ENCODE measurements at regions of chr1 and their contacts with region 1.

Region 1: DNA sequence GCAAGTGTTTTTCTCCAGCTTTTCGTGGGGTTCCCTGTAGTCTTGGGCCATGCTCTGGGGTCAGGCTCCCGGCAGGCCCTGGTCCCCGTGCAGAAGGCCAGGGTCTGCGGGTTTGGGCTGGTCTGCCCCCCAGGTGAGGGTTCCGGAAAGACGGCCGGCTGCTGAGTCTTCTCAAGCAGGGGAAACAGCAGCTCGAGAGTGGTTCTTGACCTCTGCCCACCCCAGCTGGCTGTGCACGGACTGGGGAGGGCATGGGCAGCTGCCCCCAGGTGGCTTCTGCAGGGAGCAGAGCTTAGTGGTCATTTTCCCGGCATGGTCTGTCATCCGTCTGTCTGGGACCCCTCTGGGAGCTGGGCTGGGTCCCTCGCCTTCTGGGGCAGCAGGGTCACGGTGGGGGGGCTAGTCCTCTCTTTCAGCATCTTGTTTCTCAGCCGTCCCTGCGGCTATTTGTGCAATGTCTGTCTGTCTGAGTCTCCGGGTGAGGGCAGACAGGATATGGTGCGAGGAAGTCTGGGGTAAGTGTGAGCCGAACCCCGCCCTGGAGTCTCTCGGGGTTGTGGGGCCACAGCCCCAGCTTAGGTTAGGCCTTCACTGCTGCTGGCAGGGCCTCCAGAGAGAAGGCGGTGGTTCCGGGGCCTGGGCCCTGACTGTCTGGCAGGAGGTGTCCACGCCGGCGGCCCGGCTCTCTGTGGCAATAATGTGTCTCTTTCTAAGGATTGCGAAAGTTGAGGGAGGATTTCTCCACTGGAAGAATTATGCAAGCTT is 6.1 kb downstream of the SKI start:
- DNase-seq: peak; percentile 95
- ATAC-seq: peak; percentile 57 to 80

Region 2: DNA sequence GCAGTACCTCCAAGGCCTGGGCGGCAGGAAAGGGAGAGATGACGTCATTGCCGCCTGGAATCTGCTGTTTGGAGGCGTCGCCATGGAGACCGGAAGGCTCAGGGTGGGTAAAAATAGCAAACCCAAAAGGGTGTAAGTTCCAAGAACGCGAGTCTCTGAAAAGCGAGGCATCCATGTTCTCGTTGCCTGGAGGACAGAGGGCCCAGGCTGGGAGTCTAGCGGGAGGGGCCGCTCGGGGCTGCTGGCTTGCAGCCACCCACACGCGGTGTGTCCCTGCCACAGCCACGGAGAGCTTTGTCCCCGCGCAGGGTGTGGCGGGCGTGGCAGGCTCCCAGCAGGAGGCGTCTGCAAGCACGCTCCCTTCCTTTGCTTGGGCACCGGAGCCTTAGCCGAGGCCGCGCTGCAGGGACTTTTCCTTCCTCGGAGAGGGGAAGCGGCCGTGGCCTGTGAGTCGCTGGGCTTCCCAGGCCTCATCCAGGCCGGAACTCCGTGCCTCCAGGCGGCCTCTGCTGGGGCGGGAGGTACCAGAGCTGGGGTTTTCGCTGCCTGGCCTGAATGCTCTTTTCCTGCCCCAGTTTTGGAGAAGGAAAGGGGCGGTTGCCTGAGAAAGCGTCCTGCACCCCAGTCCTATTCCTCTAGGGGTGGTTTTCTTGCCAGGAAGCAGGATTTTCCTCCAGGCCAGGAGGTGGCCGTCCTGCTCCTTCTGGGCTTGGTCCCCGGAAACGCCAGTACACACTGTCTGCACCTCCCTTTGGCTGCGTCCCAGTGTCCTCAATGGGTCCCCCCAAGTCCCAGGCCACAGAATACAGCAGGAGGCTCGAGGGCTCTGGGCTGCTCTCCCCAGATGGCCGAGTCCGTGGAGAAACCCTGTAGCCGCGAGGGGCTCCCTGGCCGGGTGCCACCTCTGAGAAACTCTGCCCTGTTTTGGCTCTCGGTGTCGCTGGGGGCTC is 21.4 kb before region 1 on chr1:
- intact Hi-C with region 1: no loop called
- DNase-seq: peak; percentile 98
- ATAC-seq: peak; percentile 65 to 71

Region 3: DNA sequence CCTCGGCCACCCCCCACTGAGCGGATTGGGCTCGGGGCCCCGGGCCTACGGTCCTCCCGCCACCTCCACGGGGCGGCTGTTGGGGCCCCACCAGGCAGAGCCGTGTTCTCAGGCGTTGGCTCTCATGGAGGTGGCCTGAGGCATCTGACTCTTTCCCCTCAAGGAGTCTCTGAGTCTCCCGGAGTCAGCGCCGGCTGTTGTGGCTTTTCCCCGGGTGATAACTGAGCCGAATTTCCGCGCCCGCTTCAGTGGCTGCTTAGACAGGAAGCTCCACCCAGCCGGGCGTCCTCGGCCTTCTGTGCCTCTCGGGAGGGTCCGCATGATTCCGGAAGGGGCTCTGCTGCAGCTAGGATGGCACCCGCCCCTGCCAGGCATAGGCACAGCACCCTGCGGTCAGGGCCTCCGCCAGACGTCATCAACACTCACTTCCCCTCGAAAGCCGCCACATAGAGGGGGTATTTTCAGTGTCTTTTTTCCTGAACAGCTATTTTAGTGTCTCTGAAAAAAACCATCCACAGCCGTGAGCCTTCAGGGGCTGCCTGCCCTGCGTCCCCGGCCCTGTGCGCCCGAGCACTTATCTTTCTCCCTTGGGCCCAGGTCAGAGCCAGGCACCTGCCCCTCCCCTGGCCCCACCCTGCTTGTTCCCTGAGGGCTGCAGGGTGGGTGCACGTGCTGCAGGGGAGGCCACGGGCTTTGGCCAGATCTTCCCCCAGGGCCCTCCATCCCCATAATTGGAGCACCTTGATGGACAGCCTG is 66.8 kb after region 1 on chr1:
- intact Hi-C with region 1: loop called (anchors 5 to 10 kb)
- DNase-seq: peak; percentile 93
- ATAC-seq: peak; percentile 53 to 66

Measured in left cardiac atrium (tissue), 4 donors.